Endothelial cell of umbilical vein (primary cell): ENCODE measurements at regions of chr2 and their contacts with region 1.

Region 1: GRCh38 chr2:290090-290722 is 2.3 kb upstream of the ALKAL2 start:
- DNase-seq: peak; percentile 67
- H3K4me3 ChIP-seq: peak overlapping the region in 1 of 3 experiments; percentile 19
- H3K27ac ChIP-seq: no peak overlapping the region
- H3K4me1 ChIP-seq: peaks cover 3% of the 10 kb centered on the region
- H3K27me3 ChIP-seq: peaks cover 16 to 37% of the 10 kb centered on the region in 2 experiments
- CTCF ChIP-seq: peak; percentile 66 to 75
- POLR2A ChIP-seq: no peak

Region 2: DNA sequence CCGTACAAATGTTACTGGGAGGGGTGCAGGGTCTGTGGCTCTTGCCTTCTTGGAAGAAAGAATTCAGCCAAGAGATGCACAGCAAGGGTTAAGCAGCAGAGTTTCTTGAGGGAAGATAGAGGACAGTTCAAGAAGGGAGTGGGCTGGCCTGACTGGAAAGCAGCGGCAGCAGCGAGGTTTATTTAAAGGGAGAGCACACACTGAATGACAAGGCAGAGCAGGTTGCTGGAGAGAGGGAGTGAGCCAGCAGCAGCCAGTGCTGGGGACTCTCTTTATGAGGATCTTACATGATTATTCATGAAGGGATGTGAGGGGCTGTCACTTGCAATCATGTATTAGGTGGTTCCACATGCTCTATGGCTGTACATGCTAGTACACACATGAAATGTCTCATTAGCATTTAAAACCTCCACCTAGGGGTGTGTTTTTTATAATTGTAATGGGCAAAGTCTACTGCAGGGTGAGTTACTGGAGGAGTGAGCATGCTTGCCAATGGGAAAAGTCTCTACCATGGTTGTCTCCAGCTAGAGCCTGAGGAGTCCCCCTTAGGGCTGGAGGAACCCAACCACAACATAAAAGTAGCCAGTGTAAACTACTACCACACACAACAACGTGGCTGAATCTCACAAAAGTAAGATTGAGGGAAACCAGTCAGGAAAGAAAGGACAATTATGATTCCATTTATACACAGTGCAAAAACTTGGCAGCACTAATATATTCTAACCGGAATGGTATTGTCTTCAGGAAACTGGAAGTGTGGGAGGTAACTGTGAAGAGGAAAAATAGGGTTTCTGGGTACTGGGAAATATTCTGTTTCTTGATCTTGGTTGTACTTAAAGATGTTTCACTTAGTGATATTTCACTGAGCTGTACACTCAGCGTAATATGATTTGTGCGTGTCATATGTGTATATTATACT is 156.3 kb before region 1 on chr2:
- CTCF ChIA-PET with region 1: no interaction called
- POLR2A ChIA-PET with region 1: no interaction called
- dilution Hi-C with region 1: no loop called
- intact Hi-C with region 1: no loop called
- DNase-seq: no peak
- H3K4me3 ChIP-seq: no peak overlapping the region
- H3K27ac ChIP-seq: no peak overlapping the region
- H3K4me1 ChIP-seq: no peaks in the 10 kb centered on the region
- H3K27me3 ChIP-seq: no peaks in the 10 kb centered on the region
- CTCF ChIP-seq: no peak
- POLR2A ChIP-seq: no peak

Region 3: DNA sequence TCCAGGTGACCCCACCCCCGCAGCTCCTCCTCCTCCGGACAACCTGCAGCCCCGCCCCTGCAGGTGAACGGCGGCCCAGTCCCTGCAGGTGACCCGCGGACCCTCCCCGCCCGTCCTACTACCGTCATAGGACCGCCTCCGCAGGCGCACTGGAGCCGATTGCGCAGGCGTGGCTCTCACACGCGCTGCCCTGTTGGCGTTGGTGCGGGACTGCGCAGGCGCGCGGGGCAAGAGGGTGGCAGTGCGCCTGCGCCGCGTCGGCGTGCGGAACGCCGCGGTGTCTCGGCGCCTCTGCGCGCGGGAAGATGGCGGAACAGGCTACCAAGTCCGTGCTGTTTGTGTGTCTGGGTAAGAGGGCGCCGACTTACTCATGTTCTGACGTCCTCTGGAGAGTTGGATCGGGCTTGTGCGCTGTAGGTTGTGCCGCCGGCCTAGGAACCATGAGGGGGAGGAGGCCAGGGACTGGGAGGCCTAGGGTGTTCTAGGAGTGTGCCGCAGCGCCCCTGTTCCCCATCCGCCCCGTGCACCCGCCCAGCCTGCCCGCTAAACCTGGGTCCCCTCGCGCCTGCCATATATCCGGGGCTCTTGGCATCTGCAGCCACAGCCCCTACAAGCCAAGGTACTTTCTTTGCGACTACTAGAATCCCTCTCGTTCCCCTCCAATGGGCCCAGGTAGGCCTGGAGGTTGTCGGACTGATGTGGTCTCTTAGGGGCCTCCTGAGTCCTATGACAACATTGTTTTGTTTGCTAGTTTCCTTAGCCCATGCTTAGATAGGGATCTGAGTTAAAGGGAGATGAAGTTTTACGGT is 25.3 kb before region 1 on chr2 and contains the start of gene ACP1:
- CTCF ChIA-PET with region 1: no interaction called
- POLR2A ChIA-PET with region 1: no interaction called
- dilution Hi-C with region 1: no loop called
- intact Hi-C with region 1: loop called (anchors 2 kb)
- DNase-seq: peak; percentile 97
- H3K4me3 ChIP-seq: peak within 1 kb of the TSS; percentile 75 to 90 (median 79)
- H3K27ac ChIP-seq: peak within 1 kb of the TSS; percentile 42
- H3K4me1 ChIP-seq: peaks cover 17% of the 10 kb centered on the region
- H3K27me3 ChIP-seq: no peaks in the 10 kb centered on the region
- CTCF ChIP-seq: no peak
- POLR2A ChIP-seq: peak; percentile 90
- total RNA-seq, gene ACP1: 76.2 and 80.2 TPM in 2 replicates

Region 4: DNA sequence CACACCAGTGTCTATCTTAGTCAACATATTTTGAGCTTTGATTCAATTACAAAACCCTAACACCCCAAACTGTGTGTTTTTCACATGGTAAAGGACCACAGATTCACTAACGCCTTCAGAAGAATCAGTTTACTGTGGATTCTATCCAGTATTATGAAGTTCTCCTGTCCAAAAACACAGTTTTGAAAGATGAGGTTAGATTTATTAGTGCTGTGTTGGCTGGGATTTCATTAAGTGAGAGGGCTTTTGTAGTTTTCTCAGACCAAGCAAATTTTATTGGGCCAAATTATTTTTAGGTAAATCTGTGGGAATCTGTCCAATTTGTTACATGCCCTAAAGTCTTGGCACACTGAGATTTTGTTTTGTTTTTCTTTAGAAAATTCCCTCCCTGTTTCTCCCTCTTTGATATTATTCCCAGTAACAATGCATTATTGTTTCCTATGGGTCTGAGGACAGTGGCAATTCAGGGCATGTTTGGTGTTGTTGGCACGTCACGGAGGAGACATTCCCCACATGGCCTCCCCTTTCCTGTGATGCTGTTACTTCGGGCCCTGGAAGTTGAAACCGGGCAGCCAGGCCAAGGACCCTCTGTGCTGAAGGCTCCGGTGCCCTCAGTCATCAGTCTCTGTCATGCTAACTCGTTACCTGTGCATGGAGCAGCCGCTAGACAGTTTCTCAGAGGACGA is 85.2 kb after region 1 on chr2:
- CTCF ChIA-PET with region 1: no interaction called
- POLR2A ChIA-PET with region 1: no interaction called
- dilution Hi-C with region 1: no loop called
- intact Hi-C with region 1: no loop called
- DNase-seq: no peak
- H3K4me3 ChIP-seq: no peak overlapping the region
- H3K27ac ChIP-seq: no peak overlapping the region
- H3K4me1 ChIP-seq: no peaks in the 10 kb centered on the region
- H3K27me3 ChIP-seq: no peaks in the 10 kb centered on the region
- CTCF ChIP-seq: no peak
- POLR2A ChIP-seq: no peak